Activated CD8-positive, alpha-beta memory T cell treated with anti-CD3 and anti-CD28 coated beads, Interleukin-2, amount 10 ng/mL, durations not matched to agents 7 days and 5 days (primary cell): ENCODE measurements at regions of chr3 and their contacts with region 1.

Region 1: GRCh38 chr3:47522082-47522987 is 8.8 kb upstream of the ELP6 start:
- DNase-seq: peak; percentile 89
- ATAC-seq: peak; percentile 92
- H3K4me3 Mint-ChIP-seq: no peak overlapping the region
- H3K27ac Mint-ChIP-seq: peak overlapping the region; percentile 26
- H3K4me1 Mint-ChIP-seq: peaks cover 9% of the 10 kb centered on the region
- H3K27me3 Mint-ChIP-seq: peaks cover 2% of the 10 kb centered on the region

Region 2: DNA sequence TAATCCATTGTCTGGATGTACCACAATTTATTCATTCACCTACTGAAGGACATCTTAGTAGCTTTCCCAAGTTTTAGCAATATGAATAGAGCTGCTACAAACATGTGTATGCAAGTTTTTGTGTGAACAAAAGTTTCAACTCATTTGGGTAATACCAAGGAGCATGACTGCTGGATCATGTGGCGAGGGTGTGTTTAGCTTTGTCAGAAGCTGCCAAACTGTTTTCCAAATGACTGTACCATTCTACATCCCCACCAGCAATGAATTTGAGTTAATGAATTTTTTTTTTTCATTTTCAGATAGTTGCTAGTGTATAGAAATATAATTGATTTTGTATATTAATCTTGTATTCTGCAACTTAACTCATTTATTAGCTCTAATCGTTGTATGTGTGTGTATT is 11.1 kb after region 1 on chr3:
- CTCF ChIA-PET with region 1: interaction called, 10 read pairs
- DNase-seq: no peak
- ATAC-seq: no peak
- H3K4me3 Mint-ChIP-seq: no peak overlapping the region
- H3K27ac Mint-ChIP-seq: no peak overlapping the region
- H3K4me1 Mint-ChIP-seq: no peaks in the 10 kb centered on the region
- H3K27me3 Mint-ChIP-seq: peaks cover 19% of the 10 kb centered on the region

Region 3: DNA sequence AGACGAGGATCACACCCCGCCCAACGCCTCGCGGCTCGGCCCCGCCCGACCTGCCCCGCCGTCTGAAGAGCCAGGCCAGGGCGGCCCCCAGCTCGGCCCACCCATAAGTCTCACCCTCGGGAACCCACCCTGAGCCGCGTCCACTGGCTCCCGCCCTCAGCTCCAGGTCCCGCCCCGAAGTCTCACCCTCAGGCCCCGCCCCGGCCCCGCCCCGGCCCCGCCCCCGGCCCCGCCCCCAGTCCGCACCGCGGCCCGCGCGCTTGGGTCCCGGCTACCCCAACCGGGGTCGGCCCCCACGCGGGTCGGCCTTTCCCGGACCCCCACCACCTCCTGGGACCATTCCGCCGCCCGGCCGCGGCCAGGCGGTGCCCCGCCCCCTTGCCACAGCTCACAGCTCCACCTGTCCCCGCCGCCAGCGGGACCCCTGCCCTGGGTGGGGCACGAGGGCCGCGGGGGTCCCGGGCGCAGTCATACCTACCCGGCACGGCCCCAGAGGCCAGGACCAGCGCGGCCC is 55.8 kb after region 1 on chr3:
- CTCF ChIA-PET with region 1: interaction called, 11 read pairs
- DNase-seq: peak; percentile 53
- ATAC-seq: peak; percentile 84
- H3K4me3 Mint-ChIP-seq: peak overlapping the region; percentile 54
- H3K27ac Mint-ChIP-seq: no peak overlapping the region
- H3K4me1 Mint-ChIP-seq: no peaks in the 10 kb centered on the region
- H3K27me3 Mint-ChIP-seq: peaks cover 43% of the 10 kb centered on the region

Region 4: DNA sequence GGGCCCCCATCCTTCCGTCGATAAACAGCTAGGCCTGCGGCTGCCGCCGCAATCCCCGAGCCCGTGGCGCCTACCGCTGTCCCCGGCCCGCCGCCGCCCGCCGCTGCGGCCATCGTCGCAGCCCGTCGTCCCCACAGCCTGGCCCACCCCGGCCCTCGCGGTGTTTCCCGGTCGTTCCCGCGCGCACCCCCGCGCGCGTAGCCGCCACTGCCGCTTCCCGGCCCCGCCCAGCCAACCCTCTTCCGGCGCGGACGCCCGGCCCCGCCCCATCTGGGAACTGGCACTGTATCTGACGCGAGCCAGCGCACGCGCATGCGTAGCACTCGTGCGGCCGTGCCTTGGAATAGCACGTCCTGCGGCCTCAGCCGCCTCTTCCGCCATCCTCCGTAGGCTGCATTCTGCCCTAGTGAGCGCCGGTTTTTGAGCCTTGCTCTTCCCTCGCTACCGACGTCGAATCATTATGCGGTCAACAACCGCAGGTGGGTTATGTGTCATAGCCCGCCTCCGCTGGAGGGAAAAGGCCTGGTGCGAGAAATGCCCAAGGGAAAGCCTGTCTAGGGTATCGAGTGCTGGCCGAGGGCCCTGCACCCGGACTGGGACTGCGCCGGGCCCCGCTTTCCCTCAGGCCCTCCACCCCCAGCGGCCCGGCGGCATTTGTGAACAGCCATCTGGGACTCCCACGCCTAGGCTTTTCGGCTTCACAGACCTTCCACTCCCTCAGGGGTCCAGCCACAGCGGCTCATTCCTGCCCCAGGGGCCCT is 259.5 kb after region 1 on chr3 and contains the start of gene SMARCC1:
- CTCF ChIA-PET with region 1: interaction called, 75 read pairs
- DNase-seq: peak; percentile 99
- ATAC-seq: peak; percentile 95
- H3K4me3 Mint-ChIP-seq: peak within 1 kb of the TSS; percentile 94
- H3K27ac Mint-ChIP-seq: peak within 1 kb of the TSS; percentile 98
- H3K4me1 Mint-ChIP-seq: peaks cover 22% of the 10 kb centered on the region
- H3K27me3 Mint-ChIP-seq: no peaks in the 10 kb centered on the region
- total RNA-seq, gene SMARCC1: 84.3 to 111 TPM

Region 5: GRCh38 chr3:47802734-47803477 is 280.6 kb after region 1 on chr3 and contains the start of gene DHX30:
- CTCF ChIA-PET with region 1: interaction called, 13 read pairs
- DNase-seq: peak; percentile 88
- ATAC-seq: peak; percentile 92
- H3K4me3 Mint-ChIP-seq: peak within 1 kb of the TSS; percentile 89
- H3K27ac Mint-ChIP-seq: peak within 1 kb of the TSS; percentile 93
- H3K4me1 Mint-ChIP-seq: peaks cover 28% of the 10 kb centered on the region
- H3K27me3 Mint-ChIP-seq: no peaks in the 10 kb centered on the region
- total RNA-seq, gene DHX30: 84.8 to 95.6 TPM